ENCODE measurements at regions of chr17 and their contacts with region 1.

Region 1: GRCh38 chr17:48228721-48229120 is 121.2 kb downstream of the SNX11 start:
- DNase-seq: no peak
- CTCF ChIP-seq: peak; percentile 4

Region 2: DNA sequence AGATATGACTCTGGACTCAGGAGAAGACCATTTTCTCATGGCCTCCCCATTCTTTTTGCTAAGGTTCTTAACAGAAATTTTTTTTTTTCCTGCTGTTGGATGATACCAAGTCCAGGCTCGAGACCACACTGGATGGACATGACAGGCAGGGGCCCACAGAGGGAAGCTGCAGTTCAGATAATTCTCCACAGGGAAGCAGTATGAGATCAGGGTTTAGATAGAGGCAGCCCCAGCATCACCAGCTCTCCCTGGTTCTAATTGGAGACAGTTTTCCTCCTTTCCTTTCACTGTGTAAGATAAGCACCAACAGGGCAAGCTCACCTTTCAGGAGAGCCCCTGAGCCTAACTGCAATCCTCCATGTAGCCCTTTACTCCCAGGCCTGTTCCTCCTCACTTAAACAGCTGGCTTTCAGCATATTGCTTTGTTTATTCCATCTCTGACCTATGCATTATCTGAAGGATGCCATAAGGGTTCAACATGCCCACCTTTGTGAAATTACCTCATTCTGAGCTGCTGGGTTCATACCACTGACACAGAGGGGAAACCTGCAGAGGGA is 13.1 kb before region 1 on chr17:
- CTCF ChIA-PET with region 1: interaction called, 26 read pairs
- POLR2A ChIA-PET with region 1: no interaction called
- DNase-seq: no peak
- CTCF ChIP-seq: peak; percentile 31

Region 3: GRCh38 chr17:48427598-48427997 is 198.9 kb after region 1 on chr17:
- CTCF ChIA-PET with region 1: no interaction called
- POLR2A ChIA-PET with region 1: no interaction called
- DNase-seq: peak; percentile 68
- CTCF ChIP-seq: no peak

Measured in GM10248 (cell line).